B cell (primary cell): ENCODE measurements at regions of chr2 and their contacts with region 1.

Region 1: DNA sequence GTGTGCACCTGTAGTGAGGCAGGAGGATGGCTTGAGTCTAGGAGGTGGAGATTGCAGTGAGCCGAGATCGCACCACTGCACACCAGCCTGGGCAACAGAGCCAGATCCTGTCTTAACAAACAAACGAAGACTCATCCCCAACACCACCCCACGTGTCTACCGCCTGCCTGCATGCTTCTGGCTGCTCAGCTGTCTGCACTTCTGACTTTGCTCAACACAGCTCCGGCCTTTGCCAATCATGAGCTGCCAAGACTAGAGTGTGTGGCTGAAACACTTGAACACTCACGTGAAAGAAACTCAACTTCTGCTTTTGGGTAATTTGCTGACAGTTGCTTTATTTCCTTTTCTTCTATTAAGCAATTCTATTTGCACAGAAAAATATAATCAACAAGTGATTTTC is 32.1 kb upstream of the SP3 start:
- DNase-seq: peak; percentile 86
- ATAC-seq: peak; percentile 100
- H3K4me3 ChIP-seq: no peak overlapping the region
- H3K4me3 Mint-ChIP-seq: peak overlapping the region; percentile 30
- H3K27ac ChIP-seq: peak overlapping the region; percentile 25 to 58
- H3K27ac Mint-ChIP-seq: peak overlapping the region; percentile 84
- H3K4me1 ChIP-seq: peaks cover 21 to 22% of the 10 kb centered on the region in 2 donors
- H3K4me1 Mint-ChIP-seq: peaks cover 30% of the 10 kb centered on the region
- H3K27me3 ChIP-seq: no peaks in the 10 kb centered on the region
- H3K27me3 Mint-ChIP-seq: no peaks in the 10 kb centered on the region
- CTCF ChIP-seq: no peak

Region 2: GRCh38 chr2:173815772-173816171 is 181.5 kb before region 1 on chr2:
- CTCF ChIA-PET with region 1: no interaction called
- POLR2A ChIA-PET with region 1: no interaction called
- intact Hi-C with region 1: no loop called
- DNase-seq: no peak
- ATAC-seq: no peak
- H3K4me3 ChIP-seq: no peak overlapping the region
- H3K4me3 Mint-ChIP-seq: no peak overlapping the region
- H3K27ac ChIP-seq: no peak overlapping the region
- H3K27ac Mint-ChIP-seq: no peak overlapping the region
- H3K4me1 ChIP-seq: no peaks in the 10 kb centered on the region
- H3K4me1 Mint-ChIP-seq: no peaks in the 10 kb centered on the region
- H3K27me3 ChIP-seq: no peaks in the 10 kb centered on the region
- H3K27me3 Mint-ChIP-seq: peaks cover 15% of the 10 kb centered on the region
- CTCF ChIP-seq: no peak

Region 3: GRCh38 chr2:174012347-174013314 is 15.4 kb after region 1 on chr2:
- CTCF ChIA-PET with region 1: interaction called, 3 read pairs
- POLR2A ChIA-PET with region 1: interaction called, 3 read pairs
- intact Hi-C with region 1: loop called (anchors 2 kb)
- DNase-seq: peak; percentile 58
- ATAC-seq: peak; percentile 69
- H3K4me3 ChIP-seq: peak overlapping the region; percentile 25 to 66 (median 55)
- H3K4me3 Mint-ChIP-seq: peak overlapping the region; percentile 75
- H3K27ac ChIP-seq: peak overlapping the region in 1 of 2 donors; percentile 13
- H3K27ac Mint-ChIP-seq: no peak overlapping the region
- H3K4me1 ChIP-seq: peaks cover 4 to 13% of the 10 kb centered on the region in 2 donors
- H3K4me1 Mint-ChIP-seq: peaks cover 13% of the 10 kb centered on the region
- H3K27me3 ChIP-seq: peaks cover 0 to 2% (median 0%) of the 10 kb centered on the region in 4 experiments
- H3K27me3 Mint-ChIP-seq: peaks cover 5% of the 10 kb centered on the region
- CTCF ChIP-seq: no peak